ENCODE measurements at regions of chr19 and their contacts with region 1.

Region 1: GRCh38 chr19:34171877-34172660 is at the start of gene LSM14A:
- DNase-seq: peak; percentile 90

Region 2: DNA sequence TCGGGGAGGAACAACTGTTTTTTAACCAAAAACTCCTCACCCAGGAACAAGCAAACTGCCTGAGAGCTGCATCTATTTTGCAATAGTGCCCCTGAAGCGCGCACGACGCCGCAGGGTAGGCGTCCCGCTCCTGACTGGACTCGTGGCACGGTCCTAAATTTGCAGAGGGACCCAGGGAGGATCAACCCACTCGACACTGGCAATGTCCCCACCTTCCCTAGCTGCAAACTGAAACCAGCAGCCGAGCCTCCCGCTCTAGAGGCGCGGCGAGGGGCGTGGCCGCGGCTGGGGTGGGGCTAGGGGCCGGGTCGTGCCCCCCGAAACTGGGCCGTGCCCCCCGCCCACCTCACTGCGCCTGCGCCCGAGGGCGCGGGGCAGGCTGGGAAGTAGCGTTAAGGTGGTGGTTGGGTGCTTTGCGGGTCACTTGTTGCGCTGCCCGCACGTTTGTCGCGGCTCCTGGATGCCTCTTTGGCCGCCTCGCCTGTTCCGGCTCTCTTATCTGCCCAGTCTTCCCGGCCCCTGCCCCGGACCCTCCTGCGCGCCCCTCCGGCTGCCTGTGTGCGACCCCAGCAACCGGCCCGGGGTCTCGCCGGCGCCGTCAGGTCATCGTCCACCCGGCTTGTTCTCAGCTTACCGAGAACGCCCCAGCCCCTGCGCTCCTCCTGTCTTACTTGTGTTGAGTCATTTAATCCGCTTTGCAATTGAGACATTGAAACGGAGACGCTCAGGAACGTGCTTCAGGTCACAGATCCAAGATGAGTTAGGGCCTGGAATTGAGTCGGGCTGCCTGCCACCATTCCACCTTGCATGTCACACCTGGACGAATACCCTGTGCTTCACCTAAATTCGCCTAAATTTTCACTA is 37.6 kb before region 1 on chr19:
- CTCF ChIA-PET with region 1: no interaction called
- POLR2A ChIA-PET with region 1: interaction called, 12 read pairs
- DNase-seq: peak; percentile 89

Region 3: GRCh38 chr19:34145741-34146202 is 26.3 kb before region 1 on chr19:
- CTCF ChIA-PET with region 1: no interaction called
- POLR2A ChIA-PET with region 1: interaction called, 10 read pairs
- DNase-seq: peak; percentile 72

Region 4: GRCh38 chr19:34155686-34156085 is 16.4 kb before region 1 on chr19:
- CTCF ChIA-PET with region 1: no interaction called
- POLR2A ChIA-PET with region 1: interaction called, 10 read pairs
- DNase-seq: no peak

Region 5: GRCh38 chr19:34184880-34185491 is 12.9 kb after region 1 on chr19:
- CTCF ChIA-PET with region 1: interaction called, 3 read pairs
- POLR2A ChIA-PET with region 1: interaction called, 14 read pairs
- DNase-seq: peak; percentile 14

Region 6: DNA sequence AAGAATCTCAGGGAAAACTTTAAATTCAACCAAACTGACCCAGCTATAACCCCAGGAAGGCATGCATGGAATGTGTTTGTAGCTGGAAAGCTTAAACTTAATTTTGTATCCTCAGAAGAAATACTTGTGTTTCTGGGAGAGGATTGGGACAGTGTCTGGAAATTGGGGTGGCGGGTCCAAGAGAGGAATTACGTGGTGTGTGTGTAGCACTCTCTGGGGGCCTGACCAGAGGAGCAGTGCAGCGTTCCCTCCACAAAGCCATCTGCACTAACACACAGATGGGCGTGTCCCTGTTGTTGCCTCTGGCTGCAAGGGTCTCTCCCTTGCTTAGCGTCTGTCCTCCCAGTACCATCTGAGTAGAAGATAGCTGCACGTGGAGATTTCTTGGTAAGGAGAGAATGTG is 88.7 kb after region 1 on chr19:
- CTCF ChIA-PET with region 1: no interaction called
- POLR2A ChIA-PET with region 1: no interaction called
- DNase-seq: no peak